ENCODE measurements at regions of chr3 and their contacts with region 1.

Region 1: DNA sequence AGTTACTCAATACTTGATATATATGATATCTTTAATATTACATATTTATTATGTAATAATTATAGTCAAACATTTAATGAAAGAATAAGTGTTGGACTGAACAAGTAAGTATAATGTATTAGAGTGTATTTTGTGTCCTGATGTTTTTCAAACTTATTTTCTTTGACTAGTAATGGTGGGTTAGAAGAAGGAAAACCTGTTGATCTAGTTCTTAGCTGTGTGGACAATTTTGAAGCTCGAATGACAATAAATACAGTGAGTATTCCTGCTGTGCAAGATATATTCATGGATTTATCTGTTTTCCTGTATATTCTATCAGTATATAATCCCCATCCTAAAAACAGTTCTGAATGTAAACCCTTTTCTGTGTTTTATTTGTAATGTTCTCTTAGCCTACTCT is 10.7 kb downstream of the UBA5 start:
- DNase-seq: peak in 1 of 2 experiments; percentile 38
- H3K4me3 ChIP-seq: no peak overlapping the region
- H3K27ac ChIP-seq: no peak overlapping the region
- H3K4me1 ChIP-seq: peaks cover 14% of the 10 kb centered on the region
- H3K27me3 ChIP-seq: no peaks in the 10 kb centered on the region
- CTCF ChIP-seq: no peak

Region 2: DNA sequence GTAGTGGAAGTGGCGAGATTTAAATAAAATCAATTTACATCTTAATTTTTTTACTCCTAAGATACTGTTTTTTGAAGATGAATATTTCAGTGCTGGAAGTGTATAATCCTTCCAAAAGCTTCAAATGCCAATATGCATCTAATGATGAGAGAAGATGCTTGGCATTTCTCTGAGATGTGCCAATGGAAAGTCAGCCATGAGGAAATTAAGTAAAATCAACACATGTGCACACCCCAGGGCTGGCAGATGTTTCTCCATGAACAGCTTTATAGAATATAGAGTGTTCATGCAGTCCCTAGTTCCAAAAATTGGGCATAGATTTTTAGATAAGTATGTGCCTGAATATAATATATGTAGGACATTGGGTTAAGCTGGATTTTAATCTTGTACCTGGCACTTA is 726.1 kb before region 1 on chr3:
- CTCF ChIA-PET with region 1: no interaction called
- POLR2A ChIA-PET with region 1: no interaction called
- intact Hi-C with region 1: no loop called
- DNase-seq: no peak
- H3K4me3 ChIP-seq: no peak overlapping the region
- H3K27ac ChIP-seq: no peak overlapping the region
- H3K4me1 ChIP-seq: no peaks in the 10 kb centered on the region
- H3K27me3 ChIP-seq: no peaks in the 10 kb centered on the region
- CTCF ChIP-seq: no peak

Region 3: GRCh38 chr3:132625613-132626012 is 45.2 kb before region 1 on chr3:
- CTCF ChIA-PET with region 1: no interaction called
- POLR2A ChIA-PET with region 1: no interaction called
- intact Hi-C with region 1: loop called (anchors 1 kb)
- DNase-seq: no peak
- H3K4me3 ChIP-seq: no peak overlapping the region
- H3K27ac ChIP-seq: no peak overlapping the region
- H3K4me1 ChIP-seq: peaks cover 12% of the 10 kb centered on the region; the same call in 1 of the 2 replicates
- H3K27me3 ChIP-seq: no peaks in the 10 kb centered on the region
- CTCF ChIP-seq: no peak

Region 4: GRCh38 chr3:132682201-132682600 is 11.4 kb after region 1 on chr3:
- CTCF ChIA-PET with region 1: no interaction called
- POLR2A ChIA-PET with region 1: no interaction called
- intact Hi-C with region 1: loop called (anchors 2 kb)
- DNase-seq: no peak
- H3K4me3 ChIP-seq: no peak overlapping the region
- H3K27ac ChIP-seq: no peak overlapping the region
- H3K4me1 ChIP-seq: no peaks in the 10 kb centered on the region
- H3K27me3 ChIP-seq: no peaks in the 10 kb centered on the region
- CTCF ChIP-seq: no peak

Measured in PC-9 (cell line).